ENCODE measurements at regions of chr2 and their contacts with region 1.

Region 1: GRCh38 chr2:232887171-232887850 is 17.2 kb downstream of the SNORC start:
- DNase-seq: no peak
- ATAC-seq: no peak
- H3K4me3 ChIP-seq: no peak overlapping the region
- H3K27ac ChIP-seq: no peak overlapping the region
- H3K4me1 ChIP-seq: peaks cover 0 to 6% (median 0%) of the 10 kb centered on the region in 12 donors
- H3K27me3 ChIP-seq: peaks cover 0 to 26% (median 0%) of the 10 kb centered on the region in 9 donors
- CTCF ChIP-seq: no peak
- POLR2A ChIP-seq: no peak

Region 2: DNA sequence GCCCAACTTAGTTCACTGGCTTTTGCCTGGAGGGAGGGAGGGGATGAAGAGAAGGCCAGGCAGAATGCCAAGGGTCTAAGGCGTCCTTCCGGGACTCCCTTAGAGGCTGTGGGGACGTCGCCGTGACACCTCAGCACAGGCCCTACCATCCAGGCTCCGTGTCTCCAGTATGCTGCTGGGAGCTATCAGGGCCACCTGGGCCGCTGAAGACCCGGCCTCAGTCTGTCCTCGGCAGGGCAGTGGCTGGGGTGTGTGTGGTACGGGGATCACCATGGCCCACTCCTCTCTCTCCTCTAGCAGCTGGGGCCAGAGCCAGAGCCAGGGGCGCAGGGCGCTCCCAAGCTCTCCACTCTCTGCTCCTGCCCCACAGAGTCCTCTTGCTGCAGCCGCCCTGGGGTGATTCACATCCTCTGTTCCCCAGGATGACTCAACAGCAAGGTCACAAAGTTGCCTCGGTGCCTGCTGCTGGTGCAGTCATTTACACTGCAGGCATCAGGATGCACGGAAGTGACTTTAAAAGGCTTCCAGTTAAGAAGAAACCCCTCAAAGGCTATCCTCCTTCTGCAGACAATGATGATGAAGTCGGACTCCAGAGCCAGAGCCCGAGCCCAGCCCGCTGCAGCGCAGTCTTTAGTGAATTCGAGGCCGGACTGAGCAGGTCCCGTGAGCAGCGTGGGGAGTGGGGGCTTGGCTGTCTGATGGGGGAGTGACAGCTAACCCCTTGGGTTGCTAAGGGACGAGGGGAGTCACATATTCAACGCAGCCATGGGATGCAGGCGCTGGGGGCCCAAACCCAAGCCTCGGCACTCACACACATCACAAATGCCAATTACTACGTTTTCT is 14.6 kb after region 1 on chr2:
- intact Hi-C with region 1: no loop called
- DNase-seq: no peak
- ATAC-seq: peak in 3 of 4 donors; percentile 37 to 68 (median 52)
- H3K4me3 ChIP-seq: no peak overlapping the region
- H3K27ac ChIP-seq: no peak overlapping the region
- H3K4me1 ChIP-seq: peaks cover 0 to 9% (median 0%) of the 10 kb centered on the region in 12 donors
- H3K27me3 ChIP-seq: peaks cover 0 to 18% (median 0%) of the 10 kb centered on the region in 9 donors
- CTCF ChIP-seq: no peak
- POLR2A ChIP-seq: no peak

Region 3: GRCh38 chr2:233026192-233026813 is 139.0 kb after region 1 on chr2:
- intact Hi-C with region 1: loop called in 1 of 10 experiments (anchors 10 kb)
- DNase-seq: no peak
- ATAC-seq: no peak
- H3K4me3 ChIP-seq: no peak overlapping the region
- H3K27ac ChIP-seq: no peak overlapping the region
- H3K4me1 ChIP-seq: no peaks in the 10 kb centered on the region
- H3K27me3 ChIP-seq: no peaks in the 10 kb centered on the region
- CTCF ChIP-seq: no peak
- POLR2A ChIP-seq: no peak